Activated CD4-positive, alpha-beta memory T cell treated with anti-CD3 and anti-CD28 coated beads for 36 hours (primary cell): ENCODE measurements at regions of chr15 and their contacts with region 1.

Region 1: DNA sequence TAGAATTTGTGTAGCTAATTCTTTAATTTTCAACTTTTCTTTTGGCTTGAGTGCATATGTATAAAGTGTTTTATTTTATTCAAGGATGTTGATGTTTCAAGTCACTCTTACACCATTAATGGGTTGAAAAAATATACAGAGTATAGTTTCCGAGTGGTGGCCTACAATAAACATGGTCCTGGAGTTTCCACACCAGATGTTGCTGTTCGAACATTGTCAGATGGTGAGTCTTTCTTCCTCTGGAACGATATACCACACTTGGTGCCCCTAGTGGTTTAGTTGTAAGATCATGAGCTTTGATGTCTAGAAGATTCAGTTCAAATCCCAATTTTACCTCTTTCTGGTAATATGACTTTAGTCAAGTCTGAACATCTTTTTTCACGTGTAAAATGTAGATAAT is 119.3 kb downstream of the HCN4 start:
- DNase-seq: no peak
- H3K4me3 Mint-ChIP-seq: no peak overlapping the region
- H3K27ac Mint-ChIP-seq: no peak overlapping the region
- H3K4me1 Mint-ChIP-seq: peaks cover 2% of the 10 kb centered on the region
- H3K27me3 Mint-ChIP-seq: no peaks in the 10 kb centered on the region

Region 2: GRCh38 chr15:72992841-72993252 is 256.7 kb before region 1 on chr15:
- CTCF ChIA-PET with region 1: no interaction called
- POLR2A ChIA-PET with region 1: no interaction called
- intact Hi-C with region 1: no loop called
- DNase-seq: no peak
- H3K4me3 Mint-ChIP-seq: no peak overlapping the region
- H3K27ac Mint-ChIP-seq: no peak overlapping the region
- H3K4me1 Mint-ChIP-seq: no peaks in the 10 kb centered on the region
- H3K27me3 Mint-ChIP-seq: peaks cover 5% of the 10 kb centered on the region

Region 3: GRCh38 chr15:73212424-73212823 is 37.1 kb before region 1 on chr15:
- CTCF ChIA-PET with region 1: no interaction called
- POLR2A ChIA-PET with region 1: no interaction called
- intact Hi-C with region 1: no loop called
- DNase-seq: no peak
- H3K4me3 Mint-ChIP-seq: no peak overlapping the region
- H3K27ac Mint-ChIP-seq: no peak overlapping the region
- H3K4me1 Mint-ChIP-seq: no peaks in the 10 kb centered on the region
- H3K27me3 Mint-ChIP-seq: no peaks in the 10 kb centered on the region

Region 4: GRCh38 chr15:73265536-73266153 is 16.1 kb after region 1 on chr15:
- CTCF ChIA-PET with region 1: interaction called, 93 read pairs
- POLR2A ChIA-PET with region 1: no interaction called
- intact Hi-C with region 1: no loop called
- DNase-seq: peak; percentile 72
- H3K4me3 Mint-ChIP-seq: no peak overlapping the region
- H3K27ac Mint-ChIP-seq: no peak overlapping the region
- H3K4me1 Mint-ChIP-seq: peaks cover 4% of the 10 kb centered on the region
- H3K27me3 Mint-ChIP-seq: no peaks in the 10 kb centered on the region